ENCODE measurements at regions of chr12 and their contacts with region 1.

Region 1: GRCh38 chr12:125424909-125425308 is 359.7 kb downstream of the AACS start:
- DNase-seq: no peak
- H3K4me3 ChIP-seq: no peak overlapping the region
- H3K27ac ChIP-seq: no peak overlapping the region
- H3K4me1 ChIP-seq: no peaks in the 10 kb centered on the region
- H3K27me3 ChIP-seq: no peaks in the 10 kb centered on the region
- CTCF ChIP-seq: no peak
- EP300 ChIP-seq: no peak
- POLR2A ChIP-seq: no peak

Region 2: GRCh38 chr12:125132698-125133400 is 292.1 kb before region 1 on chr12:
- intact Hi-C with region 1: no loop called
- DNase-seq: no peak
- H3K4me3 ChIP-seq: no peak overlapping the region
- H3K27ac ChIP-seq: no peak overlapping the region
- H3K4me1 ChIP-seq: no peaks in the 10 kb centered on the region
- H3K27me3 ChIP-seq: no peaks in the 10 kb centered on the region
- CTCF ChIP-seq: no peak
- EP300 ChIP-seq: no peak
- POLR2A ChIP-seq: no peak

Region 3: DNA sequence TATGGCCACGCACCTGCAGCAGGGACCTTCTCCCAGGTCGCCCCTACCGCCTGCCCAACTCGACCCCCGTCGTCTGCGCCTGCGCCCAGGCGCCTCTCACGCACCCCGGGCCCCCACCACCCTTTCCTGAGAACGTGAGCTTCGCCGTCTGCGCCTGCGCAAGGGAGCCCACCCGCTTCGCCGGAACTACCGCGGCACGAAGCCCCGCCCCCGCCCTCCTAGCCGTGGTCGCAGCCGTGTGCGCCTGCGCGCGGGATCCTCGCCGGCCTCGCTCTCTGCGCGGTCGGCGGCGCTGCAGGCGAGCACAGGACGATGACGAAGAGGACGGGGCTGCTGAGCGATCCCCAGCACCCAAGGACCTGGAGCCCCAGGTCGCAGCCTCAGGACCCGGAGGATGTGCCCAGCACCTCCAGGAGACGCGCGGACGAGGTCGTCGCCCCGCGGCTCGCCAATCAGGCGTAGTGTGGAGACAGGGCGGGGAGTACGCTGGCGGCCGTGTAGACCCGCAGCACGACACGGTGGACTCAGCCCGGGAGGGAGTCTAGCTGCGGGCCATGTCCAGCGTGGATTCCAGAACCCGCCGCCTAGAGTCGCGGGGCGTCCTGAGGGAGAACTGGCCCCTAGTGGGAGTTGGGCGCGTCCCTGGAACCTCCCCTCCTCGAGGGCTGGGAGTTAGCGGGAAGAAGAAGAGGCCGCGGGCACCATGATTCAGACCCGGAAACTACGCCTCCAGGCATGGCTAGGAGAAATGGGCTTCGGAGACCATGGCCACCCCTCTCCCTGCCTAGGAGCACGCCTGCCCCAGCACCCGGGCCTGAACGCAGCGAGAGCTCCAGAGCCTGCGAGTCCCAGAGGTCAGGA is 1721.2 kb after region 1 on chr12:
- intact Hi-C with region 1: loop called in 1 of 4 experiments (anchors 10 kb)
- DNase-seq: peak; percentile 75 to 91 (median 87)
- H3K4me3 ChIP-seq: peak overlapping the region; percentile 58
- H3K27ac ChIP-seq: no peak overlapping the region
- H3K4me1 ChIP-seq: peaks cover 6% of the 10 kb centered on the region
- H3K27me3 ChIP-seq: no peaks in the 10 kb centered on the region
- CTCF ChIP-seq: no peak
- EP300 ChIP-seq: no peak
- POLR2A ChIP-seq: no peak